Left cardiac atrium (tissue), 4 donors: ENCODE measurements at regions of chr15 and their contacts with region 1.

Region 1: DNA sequence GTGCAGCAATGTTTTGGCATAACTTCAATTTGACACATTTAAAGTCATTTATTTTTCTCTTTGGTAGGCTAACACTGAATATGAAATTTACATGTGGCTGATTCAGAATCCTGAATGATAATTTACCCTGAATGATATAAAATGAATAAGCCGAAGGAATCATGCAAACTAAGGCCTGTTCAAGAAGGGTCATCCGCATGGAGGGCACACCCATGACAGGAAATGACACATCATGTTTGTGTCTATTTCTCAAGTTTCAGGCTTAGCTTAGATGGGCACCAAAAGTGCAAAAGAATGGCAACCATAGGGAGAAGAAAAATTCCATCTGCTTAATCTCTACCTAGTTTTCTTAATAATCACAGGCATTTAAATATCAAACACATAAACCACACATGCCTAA is 141.5 kb downstream of the DUT start:
- DNase-seq: no peak
- ATAC-seq: no peak

Region 2: DNA sequence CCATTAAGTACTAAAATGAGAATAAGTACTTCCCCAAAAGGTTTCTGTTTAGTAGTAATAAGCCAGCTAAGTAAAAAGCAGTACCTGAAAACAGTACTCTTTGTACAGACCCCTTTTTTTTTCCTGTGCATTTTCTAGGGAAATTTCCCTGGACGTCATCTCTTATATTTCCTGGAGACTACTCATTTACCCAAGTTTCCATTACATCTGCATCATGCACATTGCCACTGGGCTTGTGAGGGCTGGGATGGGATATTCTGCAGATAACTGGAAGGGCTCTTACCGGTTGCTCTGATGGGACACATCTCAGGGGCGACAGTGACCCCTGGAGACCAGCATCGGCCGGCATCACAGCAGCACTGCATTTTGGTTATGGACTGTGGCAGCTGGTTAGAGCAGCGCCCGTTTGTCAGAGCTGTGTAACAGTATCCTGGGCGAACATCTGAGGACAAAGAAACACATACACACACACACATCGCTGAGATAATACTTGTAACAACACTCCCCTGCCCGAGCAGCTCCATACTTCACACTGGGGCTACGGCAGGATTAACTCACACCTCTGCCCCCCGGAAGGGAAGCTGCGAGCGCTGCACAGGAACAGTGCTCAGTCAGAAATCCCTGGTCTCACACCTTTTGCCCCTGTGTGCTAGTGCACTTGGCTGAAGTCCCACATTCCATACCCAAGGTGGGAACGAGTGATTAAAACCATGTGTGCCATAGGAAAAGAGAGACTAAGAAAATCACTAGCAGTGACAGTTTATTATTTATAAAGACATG is 47.8 kb after region 1 on chr15:
- intact Hi-C with region 1: loop called in 1 of 2 experiments (anchors 5 kb)
- DNase-seq: no peak
- ATAC-seq: peak in 1 of 2 donors; percentile 29